ENCODE measurements at regions of chr17 and their contacts with region 1.

Region 1: DNA sequence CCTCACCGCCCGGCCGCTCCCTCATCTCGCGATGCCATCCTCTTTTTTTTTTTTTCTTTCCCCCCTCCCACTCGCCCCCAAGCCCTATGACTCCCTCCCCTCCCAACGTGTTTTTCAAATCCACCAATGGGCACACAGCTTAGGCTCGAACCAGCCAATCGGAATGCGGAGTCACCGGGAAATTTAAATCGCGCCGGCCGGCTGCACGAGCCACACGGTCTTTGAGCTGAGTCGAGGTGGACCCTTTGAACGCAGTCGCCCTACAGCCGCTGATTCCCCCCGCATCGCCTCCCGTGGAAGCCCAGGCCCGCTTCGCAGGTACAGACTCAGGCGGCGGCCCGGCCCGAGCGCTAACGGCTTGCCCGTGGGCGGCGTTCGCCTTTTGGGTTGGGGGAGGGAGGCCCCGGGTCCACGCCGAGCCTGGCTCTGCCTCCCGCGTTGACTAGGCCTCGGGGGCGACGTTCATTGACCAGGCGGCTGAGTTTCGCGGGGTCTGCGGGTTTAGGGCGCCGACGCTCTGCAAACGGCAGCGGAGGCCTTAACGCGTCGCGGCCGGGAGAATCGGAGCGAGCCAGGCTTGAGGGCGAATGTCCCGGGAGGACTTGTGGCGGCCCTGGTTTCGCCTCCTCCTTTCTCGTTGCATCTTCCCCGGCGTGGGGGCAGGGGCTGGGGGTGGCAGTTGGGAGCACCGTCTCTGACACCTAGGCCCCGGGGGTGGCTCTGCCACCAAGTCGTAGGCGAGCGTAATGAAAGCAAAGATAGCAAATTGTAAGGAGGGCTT is at the start of gene KPNA2:
- DNase-seq: peak; percentile 98
- ATAC-seq: peak; percentile 90
- H3K4me3 ChIP-seq: peak within 1 kb of the TSS; percentile 93
- H3K27ac ChIP-seq: peak within 1 kb of the TSS; percentile 75
- H3K4me1 ChIP-seq: no peaks in the 10 kb centered on the region; the same call in 1 of the 2 replicates
- H3K27me3 ChIP-seq: no peaks in the 10 kb centered on the region
- CTCF ChIP-seq: no peak
- POLR2A ChIP-seq: peak; percentile 95
- RAD21 ChIP-seq: no peak
- total RNA-seq, gene KPNA2: 226 and 262 TPM in 2 replicates

Region 2: GRCh38 chr17:68435876-68436842 is 400.4 kb after region 1 on chr17:
- CTCF ChIA-PET with region 1: interaction called, 5 read pairs
- POLR2A ChIA-PET with region 1: interaction called, 10 read pairs
- dilution Hi-C with region 1: no loop called
- in situ Hi-C with region 1: no loop called
- intact Hi-C with region 1: no loop called
- DNase-seq: peak; percentile 81
- ATAC-seq: peak; percentile 78
- H3K4me3 ChIP-seq: no peak overlapping the region
- H3K27ac ChIP-seq: no peak overlapping the region
- H3K4me1 ChIP-seq: peaks cover 9% of the 10 kb centered on the region
- H3K27me3 ChIP-seq: no peaks in the 10 kb centered on the region
- CTCF ChIP-seq: peak; percentile 91
- POLR2A ChIP-seq: 0 out of 2 replicates have a peak, but pooled peaks have one; percentile 32
- RAD21 ChIP-seq: peak; percentile 85

Region 3: GRCh38 chr17:68707031-68707430 is 671.3 kb after region 1 on chr17:
- CTCF ChIA-PET with region 1: no interaction called
- POLR2A ChIA-PET with region 1: interaction called, 17 read pairs
- dilution Hi-C with region 1: no loop called
- in situ Hi-C with region 1: no loop called
- intact Hi-C with region 1: no loop called
- DNase-seq: peak; percentile 56
- ATAC-seq: peak; percentile 79
- H3K4me3 ChIP-seq: no peak overlapping the region
- H3K27ac ChIP-seq: no peak overlapping the region
- H3K4me1 ChIP-seq: peaks cover 7% of the 10 kb centered on the region; the same call in 1 of the 2 replicates
- H3K27me3 ChIP-seq: no peaks in the 10 kb centered on the region
- CTCF ChIP-seq: no peak
- POLR2A ChIP-seq: no peak
- RAD21 ChIP-seq: no peak